ENCODE measurements at regions of chr6 and their contacts with region 1.

Region 1: DNA sequence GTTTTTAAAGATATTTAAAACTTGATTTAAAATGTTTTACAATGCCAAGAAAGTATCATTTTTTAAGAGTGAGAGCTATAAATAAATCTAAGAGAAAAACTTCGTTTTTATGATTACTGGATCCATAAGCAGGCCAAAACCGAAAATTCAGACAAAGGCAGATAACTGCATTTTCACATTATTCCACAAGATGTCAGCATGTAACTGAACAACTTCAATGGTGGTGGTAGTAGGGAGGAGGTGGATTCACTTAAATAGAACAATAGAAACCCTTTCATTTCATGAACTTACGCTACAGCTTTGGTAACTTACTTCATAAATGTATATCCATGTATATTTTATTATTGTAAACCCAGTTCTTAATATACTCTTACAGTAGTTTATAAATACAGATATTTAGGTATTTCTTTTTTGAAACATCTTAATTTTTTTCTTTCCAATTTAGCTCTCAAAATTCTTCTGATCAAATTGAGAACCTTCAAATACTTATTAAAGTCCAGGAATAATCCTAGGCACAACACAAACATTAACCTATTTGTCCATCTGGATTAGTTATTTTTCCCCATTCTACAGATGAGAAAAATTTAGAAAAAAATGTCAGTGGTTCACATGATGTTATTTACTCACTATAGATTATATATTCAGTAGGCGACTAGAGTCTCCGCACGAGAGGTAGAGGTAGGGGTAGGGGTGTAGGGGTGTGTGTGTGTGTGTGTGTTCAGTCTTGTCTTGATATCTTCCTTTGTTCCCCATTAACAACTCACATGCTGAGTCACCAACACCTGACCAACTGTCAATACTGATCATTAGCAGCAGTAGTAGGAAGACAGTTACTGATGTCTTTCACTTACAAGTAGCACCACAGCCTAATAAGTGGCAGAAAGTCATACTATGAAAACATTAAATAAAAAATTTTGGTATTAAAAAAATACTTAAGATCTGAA is 111.5 kb downstream of the ARHGAP18 start:
- DNase-seq: no peak
- ATAC-seq: peak; percentile 76
- H3K4me3 Mint-ChIP-seq: no peak overlapping the region
- H3K27ac Mint-ChIP-seq: peak overlapping the region; percentile 14
- H3K4me1 Mint-ChIP-seq: peaks cover 4% of the 10 kb centered on the region
- H3K27me3 Mint-ChIP-seq: no peaks in the 10 kb centered on the region

Region 2: GRCh38 chr6:129498950-129499842 is 99.3 kb before region 1 on chr6:
- CTCF ChIA-PET with region 1: interaction called, 17 read pairs
- DNase-seq: no peak
- ATAC-seq: peak; percentile 81
- H3K4me3 Mint-ChIP-seq: no peak overlapping the region
- H3K27ac Mint-ChIP-seq: peak overlapping the region; percentile 9
- H3K4me1 Mint-ChIP-seq: peaks cover 28% of the 10 kb centered on the region
- H3K27me3 Mint-ChIP-seq: no peaks in the 10 kb centered on the region

Region 3: GRCh38 chr6:130076512-130076911 is 478.0 kb after region 1 on chr6:
- CTCF ChIA-PET with region 1: no interaction called
- DNase-seq: no peak
- ATAC-seq: no peak
- H3K4me3 Mint-ChIP-seq: no peak overlapping the region
- H3K27ac Mint-ChIP-seq: no peak overlapping the region
- H3K4me1 Mint-ChIP-seq: peaks cover 32% of the 10 kb centered on the region
- H3K27me3 Mint-ChIP-seq: no peaks in the 10 kb centered on the region